ENCODE measurements at regions of chr22 and their contacts with region 1.

Region 1: GRCh38 chr22:30634471-30635233 is 929 bp upstream of the SLC35E4 start:
- DNase-seq: peak; percentile 65 to 96
- H3K4me3 ChIP-seq: peak overlapping the region; percentile 34 to 71 (median 44); a peak in 7 of 8 replicates
- H3K27ac ChIP-seq: no peak overlapping the region
- H3K4me1 ChIP-seq: peaks cover 0 to 22% (median 14%) of the 10 kb centered on the region in 4 experiments; a peak in 6 of 7 replicates
- H3K27me3 ChIP-seq: peaks cover 0 to 4% (median 0%) of the 10 kb centered on the region in 4 experiments; a peak in 2 of 7 replicates
- CTCF ChIP-seq: peak; percentile 92 to 98 (median 96)
- EP300 ChIP-seq: no peak
- POLR2A ChIP-seq: no peak
- RAD21 ChIP-seq: peak; percentile 87 to 91

Region 2: DNA sequence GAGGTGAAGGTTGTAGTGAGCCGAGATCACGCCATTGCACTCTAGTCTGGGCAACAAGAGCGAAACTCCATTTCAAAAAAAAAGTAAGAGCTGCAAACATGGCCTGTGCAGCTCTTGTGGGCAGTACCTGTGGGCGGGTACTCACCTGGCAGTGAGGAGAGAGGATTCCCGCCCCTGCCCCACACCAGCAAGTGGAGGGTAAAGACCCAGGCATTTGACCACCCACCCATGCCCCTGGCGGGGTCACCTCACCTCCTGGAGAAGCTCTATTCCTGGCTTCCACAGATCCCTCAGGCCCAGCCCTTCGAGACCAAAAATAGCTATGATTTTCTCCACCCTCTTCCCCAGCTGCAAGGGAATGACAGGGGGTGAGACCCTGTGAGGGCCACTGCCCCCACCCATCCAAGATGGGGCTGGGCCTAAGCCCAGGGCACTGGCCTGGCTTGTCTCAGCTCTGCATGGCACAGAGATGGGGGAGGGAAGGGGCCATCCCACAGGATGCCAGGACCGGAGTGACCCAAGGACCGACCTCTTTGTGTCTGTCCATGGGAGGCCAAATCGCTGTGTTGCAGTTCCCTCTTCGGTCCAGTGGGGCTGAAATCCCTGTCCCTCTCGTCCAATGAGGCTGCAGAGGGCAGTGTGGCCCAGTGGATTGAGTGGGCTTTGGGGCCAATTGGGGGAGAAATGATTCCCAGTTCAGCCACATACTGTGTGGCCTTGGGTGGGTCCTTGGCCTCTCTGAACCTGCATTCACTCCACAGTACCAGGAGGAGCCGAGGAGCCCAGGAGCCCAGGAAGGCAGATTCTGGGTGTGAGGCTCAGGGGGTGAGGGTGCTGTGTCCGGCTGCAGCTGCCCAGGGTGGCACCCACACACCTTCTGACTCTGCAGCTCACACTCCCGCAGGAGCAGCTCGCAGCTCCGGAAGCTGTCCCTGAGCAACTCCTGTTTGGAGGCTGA is 102.7 kb before region 1 on chr22:
- CTCF ChIA-PET with region 1: no interaction called
- POLR2A ChIA-PET with region 1: no interaction called
- DNase-seq: no peak
- H3K4me3 ChIP-seq: no peak overlapping the region
- H3K27ac ChIP-seq: no peak overlapping the region
- H3K4me1 ChIP-seq: no peaks in the 10 kb centered on the region; a peak in 1 of 7 replicates
- H3K27me3 ChIP-seq: no peaks in the 10 kb centered on the region
- CTCF ChIP-seq: peak; percentile 22 to 37 (median 30)
- EP300 ChIP-seq: no peak
- POLR2A ChIP-seq: no peak
- RAD21 ChIP-seq: peak in 1 of 2 experiments; percentile 15; a peak in 1 of 4 replicates

Region 3: DNA sequence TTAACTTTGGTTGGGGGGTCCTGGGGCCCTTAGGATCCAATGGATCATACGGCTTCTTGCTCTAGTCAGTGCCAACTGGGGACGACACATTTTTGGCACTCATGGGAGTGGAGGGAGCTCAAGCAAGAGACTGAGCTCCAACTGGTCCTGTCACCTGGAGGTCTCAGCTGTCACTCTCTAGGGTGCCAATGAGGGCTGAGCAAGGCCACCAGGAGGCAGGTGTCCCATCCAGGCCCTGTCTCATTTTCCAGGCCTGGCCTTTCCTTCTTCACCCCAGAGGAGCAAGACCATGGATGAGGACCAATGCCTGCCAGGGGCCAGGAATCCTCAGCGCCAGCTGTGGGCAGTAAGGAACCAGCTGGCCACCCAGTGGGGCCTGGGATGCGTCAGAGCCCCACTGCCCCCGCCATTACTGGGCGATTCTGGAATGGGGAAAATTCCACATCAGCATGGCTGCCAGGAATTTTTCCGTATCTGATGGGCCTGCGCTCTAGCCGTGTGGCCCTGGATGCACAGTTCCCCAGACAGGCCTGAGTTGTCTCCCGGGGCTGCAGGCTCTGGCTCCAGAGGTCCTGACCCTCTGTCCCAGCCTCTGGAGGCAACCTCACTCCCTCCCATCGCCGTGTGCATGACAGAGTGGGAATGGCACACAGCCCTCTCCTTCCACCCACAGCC is 59.5 kb before region 1 on chr22:
- CTCF ChIA-PET with region 1: no interaction called
- POLR2A ChIA-PET with region 1: no interaction called
- DNase-seq: no peak
- H3K4me3 ChIP-seq: peak overlapping the region; percentile 40 to 70 (median 43); a peak in 7 of 8 replicates
- H3K27ac ChIP-seq: no peak overlapping the region
- H3K4me1 ChIP-seq: peaks cover 0 to 15% (median 5%) of the 10 kb centered on the region in 4 experiments; a peak in 5 of 7 replicates
- H3K27me3 ChIP-seq: no peaks in the 10 kb centered on the region
- CTCF ChIP-seq: peak in 1 of 3 experiments; percentile 39; a peak in 1 of 4 replicates
- EP300 ChIP-seq: no peak
- POLR2A ChIP-seq: 0 out of 3 replicates have a peak, but pooled peaks of 1 of the 2 experiments have one; percentile 2
- RAD21 ChIP-seq: no peak

Region 4: DNA sequence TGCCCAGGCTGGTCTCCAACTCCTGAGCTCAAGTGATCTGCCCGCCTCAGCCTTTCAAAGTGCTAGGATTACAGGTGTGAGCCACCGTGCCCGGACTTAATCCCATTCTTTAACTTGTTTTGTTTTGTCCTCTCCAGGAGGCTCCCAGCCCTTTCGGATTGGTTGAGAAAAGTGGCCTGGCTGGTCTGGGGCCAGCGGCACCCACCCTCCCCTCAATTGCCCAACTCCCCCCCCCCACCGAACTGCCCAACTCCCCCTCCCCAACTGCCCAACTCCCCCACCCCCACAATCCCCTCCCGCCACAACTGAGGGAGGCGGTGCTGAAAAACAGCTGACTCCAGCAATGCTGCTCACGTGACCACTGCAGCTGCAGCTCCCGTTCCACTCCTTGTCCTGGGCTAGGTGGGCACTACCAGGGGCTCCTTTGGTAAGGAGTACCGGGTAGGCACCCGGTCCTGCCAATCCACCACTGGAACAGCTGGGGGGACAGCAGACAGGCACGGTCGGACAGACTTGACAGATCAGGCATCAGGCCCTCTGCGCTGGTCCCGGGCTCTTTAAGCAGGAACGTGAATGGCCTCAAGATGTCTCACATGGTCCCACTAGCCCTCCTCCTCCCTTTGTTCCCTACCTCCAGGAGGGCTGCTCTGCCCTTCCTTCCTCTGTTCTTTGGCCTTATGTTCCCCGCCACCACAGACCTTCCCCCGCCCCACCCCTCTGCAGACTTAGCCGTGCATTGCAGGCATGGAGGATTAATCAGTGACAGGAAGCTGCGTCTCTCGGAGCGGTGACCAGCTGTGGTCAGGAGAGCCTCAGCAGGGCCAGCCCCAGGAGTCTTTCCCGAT is 28.0 kb before region 1 on chr22 and contains the start of gene TCN2:
- CTCF ChIA-PET with region 1: interaction called, 47 read pairs
- POLR2A ChIA-PET with region 1: interaction called, 5 read pairs
- DNase-seq: peak; percentile 61 to 91
- H3K4me3 ChIP-seq: peak within 1 kb of the TSS; percentile 48 to 83 (median 76)
- H3K27ac ChIP-seq: peak within 1 kb of the TSS; percentile 89
- H3K4me1 ChIP-seq: peaks cover 3 to 31% (median 12%) of the 10 kb centered on the region in 4 experiments
- H3K27me3 ChIP-seq: no peaks in the 10 kb centered on the region
- CTCF ChIP-seq: no peak
- EP300 ChIP-seq: peak in 1 of 2 experiments; percentile 0; a peak in 1 of 3 replicates
- POLR2A ChIP-seq: peak; percentile 74 to 81
- RAD21 ChIP-seq: no peak
- total RNA-seq, gene TCN2: 30.0 and 36.2 TPM in 2 replicates

Region 5: GRCh38 chr22:30617819-30618218 is 16.8 kb before region 1 on chr22:
- CTCF ChIA-PET with region 1: interaction called, 21 read pairs
- POLR2A ChIA-PET with region 1: interaction called, 3 read pairs
- DNase-seq: no peak
- H3K4me3 ChIP-seq: no peak overlapping the region
- H3K27ac ChIP-seq: no peak overlapping the region
- H3K4me1 ChIP-seq: no peaks in the 10 kb centered on the region
- H3K27me3 ChIP-seq: no peaks in the 10 kb centered on the region
- CTCF ChIP-seq: no peak
- EP300 ChIP-seq: no peak
- POLR2A ChIP-seq: no peak
- RAD21 ChIP-seq: no peak

Region 6: GRCh38 chr22:30667494-30668385 is 33.1 kb after region 1 on chr22 and contains the start of gene DUSP18:
- CTCF ChIA-PET with region 1: interaction called, 26 read pairs
- POLR2A ChIA-PET with region 1: no interaction called
- DNase-seq: peak; percentile 94 to 100
- H3K4me3 ChIP-seq: peak within 1 kb of the TSS; percentile 62 to 87 (median 76)
- H3K27ac ChIP-seq: peak within 1 kb of the TSS; percentile 18; the same call in 1 of the 2 replicates
- H3K4me1 ChIP-seq: peaks cover 0 to 2% (median under 1%) of the 10 kb centered on the region in 4 experiments; a peak in 4 of 7 replicates
- H3K27me3 ChIP-seq: peaks cover 0 to 13% (median 8%) of the 10 kb centered on the region in 4 experiments; a peak in 5 of 7 replicates
- CTCF ChIP-seq: peak; percentile 53 to 81 (median 73)
- EP300 ChIP-seq: peak in 1 of 2 experiments; percentile 39; a peak in 1 of 3 replicates
- POLR2A ChIP-seq: peak in 1 of 2 experiments; percentile 48; a peak in 1 of 3 replicates
- RAD21 ChIP-seq: peak in 1 of 2 experiments; percentile 58; a peak in 3 of 4 replicates
- total RNA-seq, gene DUSP18: 2.6 and 3.6 TPM in 2 replicates

Region 7: GRCh38 chr22:30680991-30681770 is 46.5 kb after region 1 on chr22:
- CTCF ChIA-PET with region 1: interaction called, 12 read pairs
- POLR2A ChIA-PET with region 1: no interaction called
- DNase-seq: no peak
- H3K4me3 ChIP-seq: no peak overlapping the region
- H3K27ac ChIP-seq: no peak overlapping the region
- H3K4me1 ChIP-seq: peaks cover 0 to 9% (median 3%) of the 10 kb centered on the region in 4 experiments; a peak in 5 of 7 replicates
- H3K27me3 ChIP-seq: no peaks in the 10 kb centered on the region; a peak in 1 of 7 replicates
- CTCF ChIP-seq: no peak
- EP300 ChIP-seq: no peak
- POLR2A ChIP-seq: no peak
- RAD21 ChIP-seq: no peak

Measured in H1 (cell line).